ENCODE measurements at regions of chr3 and their contacts with region 1.

Region 1: GRCh38 chr3:45043728-45044299 is 17.7 kb downstream of the CLEC3B start:
- DNase-seq: no peak
- ATAC-seq: no peak
- H3K4me3 ChIP-seq: no peak overlapping the region
- H3K4me3 Mint-ChIP-seq: no peak overlapping the region
- H3K27ac ChIP-seq: no peak overlapping the region
- H3K27ac Mint-ChIP-seq: no peak overlapping the region
- H3K4me1 ChIP-seq: peaks cover 12% of the 10 kb centered on the region
- H3K4me1 Mint-ChIP-seq: peaks cover 12 to 14% of the 10 kb centered on the region in 2 donors
- H3K27me3 ChIP-seq: peaks cover 2% of the 10 kb centered on the region
- H3K27me3 Mint-ChIP-seq: peaks cover 10 to 18% of the 10 kb centered on the region in 2 donors
- CTCF ChIP-seq: no peak

Region 2: GRCh38 chr3:45109771-45110508 is 66.1 kb after region 1 on chr3:
- intact Hi-C with region 1: loop called (anchors 5 kb)
- DNase-seq: peak in 1 of 2 donors; percentile 68
- ATAC-seq: peak; percentile 40 to 70 (median 44)
- H3K4me3 ChIP-seq: no peak overlapping the region
- H3K4me3 Mint-ChIP-seq: peak overlapping the region; percentile 70
- H3K27ac ChIP-seq: peak overlapping the region; percentile 17
- H3K27ac Mint-ChIP-seq: peak overlapping the region; percentile 79
- H3K4me1 ChIP-seq: peaks cover 46% of the 10 kb centered on the region
- H3K4me1 Mint-ChIP-seq: peaks cover 47 to 53% of the 10 kb centered on the region in 2 donors
- H3K27me3 ChIP-seq: no peaks in the 10 kb centered on the region
- H3K27me3 Mint-ChIP-seq: peaks cover 0 to 6% of the 10 kb centered on the region in 2 donors
- CTCF ChIP-seq: no peak